ENCODE measurements at regions of chr7 and their contacts with region 1.

Region 1: DNA sequence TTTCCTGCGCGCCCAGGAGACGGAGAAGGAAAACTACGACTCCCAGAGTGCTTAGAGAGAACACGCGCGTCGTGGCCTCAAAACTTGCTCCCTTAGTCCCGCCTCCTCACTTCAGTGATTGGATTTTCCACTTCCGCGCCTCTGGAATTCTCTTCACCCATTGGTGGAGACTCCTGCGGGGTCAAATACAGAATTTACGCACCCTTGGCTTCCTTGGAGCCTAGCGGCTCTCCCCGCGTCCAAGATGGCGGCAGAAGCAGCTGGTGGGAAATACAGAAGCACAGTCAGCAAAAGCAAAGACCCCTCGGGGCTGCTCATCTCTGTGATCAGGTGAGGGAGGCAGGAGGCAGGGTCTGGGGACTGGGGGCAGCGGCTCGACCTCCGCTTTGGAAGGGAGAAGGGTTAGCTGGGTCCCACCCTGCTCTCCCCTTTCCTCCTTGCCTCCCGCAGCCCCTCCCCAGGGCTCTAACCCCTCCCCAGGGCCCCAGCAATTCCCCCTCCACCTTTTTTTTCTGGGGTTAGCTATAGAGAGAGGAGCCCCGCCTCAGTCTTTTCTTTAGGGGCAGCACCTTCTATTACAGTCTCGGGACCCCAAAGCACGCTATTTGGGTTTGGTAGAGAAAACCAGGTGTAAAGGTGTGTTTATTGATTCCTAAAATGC is at the start of gene EXOC4:
- DNase-seq: peak; percentile 92
- H3K4me3 Mint-ChIP-seq: peak within 1 kb of the TSS; percentile 94
- H3K27ac Mint-ChIP-seq: peak within 1 kb of the TSS; percentile 87
- H3K4me1 Mint-ChIP-seq: peaks cover 22% of the 10 kb centered on the region
- H3K27me3 Mint-ChIP-seq: peaks cover 3% of the 10 kb centered on the region
- total RNA-seq, gene EXOC4: 65.0 and 70.5 TPM in 2 replicates

Region 2: DNA sequence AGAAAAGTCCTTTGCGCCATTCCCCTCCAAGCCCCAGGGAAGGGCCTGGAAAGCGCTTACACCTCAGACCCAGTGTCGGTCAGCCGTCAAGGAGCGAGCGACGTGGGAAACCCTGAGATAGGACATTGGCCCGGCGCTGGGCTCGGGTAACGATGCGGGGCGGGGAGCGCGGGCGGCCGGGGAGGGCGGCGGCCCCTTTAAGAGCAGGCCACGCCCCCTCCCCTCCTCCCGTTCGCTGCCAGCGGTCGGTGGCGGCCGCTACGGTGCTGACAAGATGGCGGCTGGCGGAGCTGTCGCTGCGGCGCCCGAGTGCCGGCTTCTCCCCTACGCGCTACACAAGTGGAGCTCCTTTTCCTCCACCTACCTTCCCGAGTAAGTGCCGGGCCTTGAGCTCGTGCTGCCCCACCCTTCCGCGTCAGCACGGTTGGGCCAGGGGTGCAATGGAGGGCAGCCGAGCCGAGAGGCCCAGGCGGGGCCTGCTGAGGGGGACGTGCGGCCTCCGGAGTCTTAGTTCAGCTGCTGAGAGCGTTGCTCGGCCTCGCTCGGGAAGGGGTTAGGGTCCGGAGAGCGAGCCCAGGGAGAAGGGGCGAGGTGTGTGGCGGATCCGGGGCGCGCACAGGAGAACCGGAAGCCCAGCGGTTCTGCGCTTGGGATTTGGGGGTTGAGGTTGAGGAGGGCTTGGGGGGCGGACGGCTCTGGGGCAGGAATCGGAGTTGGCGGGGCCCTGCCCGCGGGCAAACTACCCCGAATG is 1925.2 kb before region 1 on chr7 and contains the start of gene MKLN1:
- intact Hi-C with region 1: no loop called
- DNase-seq: peak; percentile 85
- H3K4me3 Mint-ChIP-seq: peak within 1 kb of the TSS; percentile 94
- H3K27ac Mint-ChIP-seq: peak within 1 kb of the TSS; percentile 95
- H3K4me1 Mint-ChIP-seq: peaks cover 48% of the 10 kb centered on the region
- H3K27me3 Mint-ChIP-seq: no peaks in the 10 kb centered on the region
- total RNA-seq, gene MKLN1: 38.3 and 40.9 TPM in 2 replicates

Region 3: DNA sequence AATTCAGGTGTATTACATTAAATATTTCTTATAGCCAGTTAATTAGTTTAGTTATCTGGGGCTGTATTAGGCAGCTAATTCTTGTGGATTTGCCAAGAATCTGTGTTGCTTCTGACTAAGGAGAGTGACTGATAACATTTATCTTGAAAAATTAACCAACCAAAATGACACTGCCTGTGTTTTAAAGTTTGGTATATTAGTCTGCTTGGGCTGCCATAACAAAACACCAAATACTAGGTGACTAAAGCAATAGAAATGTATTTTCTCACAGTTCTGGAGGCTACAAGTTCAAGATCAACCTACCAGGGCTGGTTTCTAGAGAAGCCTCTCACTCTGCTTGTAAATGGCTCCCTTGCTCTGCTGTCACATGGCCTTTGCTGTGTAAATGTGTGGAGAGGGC is 12.8 kb after region 1 on chr7:
- intact Hi-C with region 1: no loop called
- DNase-seq: no peak
- H3K4me3 Mint-ChIP-seq: no peak overlapping the region
- H3K27ac Mint-ChIP-seq: no peak overlapping the region
- H3K4me1 Mint-ChIP-seq: peaks cover 18% of the 10 kb centered on the region
- H3K27me3 Mint-ChIP-seq: no peaks in the 10 kb centered on the region

Region 4: DNA sequence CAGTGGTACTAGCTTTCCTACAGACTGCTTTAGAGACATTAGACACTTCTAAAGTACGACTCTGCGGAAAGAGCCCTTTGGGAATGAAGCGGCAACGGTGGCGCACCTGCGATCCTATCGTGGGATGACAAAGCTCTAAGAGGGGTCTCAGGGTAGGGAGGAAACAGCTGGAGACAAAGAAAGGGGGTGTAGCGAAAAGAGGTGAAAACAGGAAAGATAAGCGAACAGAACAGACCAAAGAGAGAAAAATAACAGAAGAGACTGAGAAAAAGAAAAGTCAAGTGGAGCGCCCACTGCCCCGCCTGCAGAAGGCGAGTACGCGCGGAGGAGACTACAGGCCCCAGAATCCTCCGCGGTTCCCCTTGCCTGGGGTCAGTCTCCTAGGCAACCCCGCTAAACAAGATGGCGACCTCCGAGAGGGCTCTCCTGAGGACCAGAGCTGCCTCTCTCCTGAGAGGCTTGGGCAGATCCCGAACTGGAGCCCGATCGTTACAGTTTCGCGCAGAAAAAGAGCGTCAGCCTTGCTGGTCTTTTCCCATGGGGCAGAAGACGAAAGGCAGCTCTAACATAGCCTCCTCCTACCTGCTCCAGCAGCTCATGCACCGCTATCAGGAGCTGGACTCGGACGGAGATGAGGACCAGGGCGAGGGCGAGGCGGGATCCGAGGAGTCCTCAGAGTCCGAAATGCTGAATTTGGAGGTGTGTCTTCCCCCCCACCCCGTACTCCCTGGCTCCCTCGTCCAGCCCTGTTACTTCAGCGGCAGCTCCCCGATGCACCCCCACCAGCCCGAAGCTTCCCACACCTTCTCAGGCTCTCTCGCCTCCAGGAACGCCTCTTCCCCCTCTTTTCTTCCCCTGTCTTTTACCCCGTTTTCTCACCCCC is 874.2 kb after region 1 on chr7 and contains the start of gene LRGUK:
- intact Hi-C with region 1: loop called (anchors 1 kb)
- DNase-seq: peak; percentile 72
- H3K4me3 Mint-ChIP-seq: peak within 1 kb of the TSS; percentile 83
- H3K27ac Mint-ChIP-seq: no peak within 1 kb of the TSS
- H3K4me1 Mint-ChIP-seq: peaks cover 10% of the 10 kb centered on the region
- H3K27me3 Mint-ChIP-seq: peaks cover 35% of the 10 kb centered on the region
- total RNA-seq, gene LRGUK: 0.11 and 0.16 TPM in 2 replicates